ENCODE measurements at regions of chr22 and their contacts with region 1.

Region 1: GRCh38 chr22:49917974-49918910 is at the starts of genes ALG12 and CRELD2:
- DNase-seq: peak; percentile 99
- total RNA-seq, gene ALG12: 14.3 TPM
- total RNA-seq, gene CRELD2: 32.9 TPM

Region 2: GRCh38 chr22:49767355-49768062 is 150.7 kb before region 1 on chr22:
- intact Hi-C with region 1: loop called (anchors 5 kb)
- DNase-seq: peak; percentile 31

Region 3: GRCh38 chr22:49852898-49853894 is 65.0 kb before region 1 on chr22 and contains the start of gene ZBED4:
- intact Hi-C with region 1: loop called (anchors 2 kb)
- DNase-seq: peak; percentile 99
- total RNA-seq, gene ZBED4: 6.2 TPM

Region 4: DNA sequence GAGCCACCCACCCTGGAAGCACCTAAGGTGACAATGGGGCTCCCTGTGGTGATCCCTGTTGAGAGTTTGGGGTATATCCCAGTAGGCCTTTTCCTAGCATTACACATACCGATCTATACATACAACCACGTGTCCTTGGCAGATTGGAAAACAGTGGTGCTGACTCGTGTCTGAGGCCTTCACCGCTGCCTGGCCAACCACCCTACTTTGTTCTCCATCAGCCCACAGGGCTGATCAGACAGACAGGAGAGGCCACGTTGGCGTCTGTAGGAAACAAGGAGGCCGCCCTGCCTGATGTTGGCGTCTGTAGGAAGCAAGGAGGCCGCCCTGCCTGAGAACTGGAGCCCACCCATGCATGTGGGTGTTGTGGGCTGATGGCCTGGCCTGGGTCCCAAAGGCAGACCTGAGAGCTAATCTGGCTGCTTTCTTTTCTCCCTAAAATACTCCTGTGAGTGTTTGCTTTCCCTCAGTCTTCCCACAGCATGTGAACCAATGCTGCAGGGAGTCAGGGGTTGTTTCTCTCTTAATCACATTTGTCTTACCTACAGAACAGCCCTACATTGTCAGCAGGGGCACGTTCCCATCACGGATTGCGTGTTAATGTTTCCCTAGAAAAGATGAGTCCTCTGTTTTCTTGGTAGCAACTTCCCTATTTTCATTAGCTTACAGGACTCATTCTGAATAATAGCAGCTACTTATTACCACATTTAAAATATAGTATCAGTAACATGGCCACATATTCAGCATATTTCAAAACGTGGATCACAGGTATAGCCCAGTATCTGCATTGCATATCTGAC is 499.4 kb after region 1 on chr22:
- intact Hi-C with region 1: no loop called
- DNase-seq: no peak